ENCODE measurements at regions of chr9 and their contacts with region 1.

Region 1: DNA sequence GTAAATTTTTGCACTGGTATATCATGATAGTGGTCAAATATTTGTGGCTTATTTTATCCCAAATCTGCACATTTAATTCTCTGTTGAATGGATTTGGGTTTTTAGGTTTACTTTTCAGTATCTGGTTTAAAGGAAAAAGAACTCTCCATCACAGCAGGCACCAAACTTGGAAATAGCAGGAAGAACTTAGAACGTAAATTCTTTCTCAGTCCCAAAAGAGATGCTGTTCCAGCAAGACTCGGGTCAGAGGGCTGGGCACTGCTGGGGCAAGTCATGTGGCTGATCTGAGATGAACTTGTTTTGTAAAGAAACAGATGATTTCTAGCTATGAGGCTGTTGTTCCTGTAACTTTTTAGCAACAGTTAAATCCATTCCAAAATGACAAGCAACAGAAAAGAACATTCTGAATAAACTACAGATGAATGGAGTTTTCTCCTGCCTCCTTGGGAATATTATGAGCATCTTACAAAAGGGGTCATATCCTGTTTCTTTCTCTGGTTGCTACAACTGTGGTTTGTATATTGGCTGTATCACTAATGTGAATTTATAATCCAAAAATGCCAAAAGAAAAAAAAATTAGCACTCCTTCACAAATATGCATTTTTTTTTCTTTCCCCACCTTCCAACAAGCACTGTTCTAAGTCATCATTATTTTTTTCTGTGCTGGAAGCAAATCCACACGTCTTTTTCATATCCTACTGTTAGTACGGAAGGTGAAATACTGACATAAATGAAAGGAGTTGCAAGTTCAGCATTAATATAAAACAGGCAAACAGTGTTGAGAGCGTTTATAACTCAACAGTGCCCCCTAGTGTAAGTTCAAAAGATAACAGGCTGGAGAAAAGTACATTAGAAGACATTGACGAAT is 31.1 kb downstream of the OR2K2 start:
- DNase-seq: peak; percentile 85
- H3K4me3 ChIP-seq: no peak overlapping the region
- H3K27ac ChIP-seq: peak overlapping the region; percentile 35 to 45 (median 42)
- H3K4me1 ChIP-seq: peaks cover 0 to 7% (median 0%) of the 10 kb centered on the region in 4 donors
- H3K27me3 ChIP-seq: no peaks in the 10 kb centered on the region
- CTCF ChIP-seq: peak; percentile 64 to 82 (median 74)
- EP300 ChIP-seq: peak in 1 of 4 donors; percentile 2
- POLR2A ChIP-seq: no peak

Region 2: GRCh38 chr9:110638381-110638954 is 660.5 kb before region 1 on chr9:
- intact Hi-C with region 1: loop called (anchors 5 kb)
- DNase-seq: no peak
- H3K4me3 ChIP-seq: no peak overlapping the region
- H3K27ac ChIP-seq: no peak overlapping the region
- H3K4me1 ChIP-seq: no peaks in the 10 kb centered on the region
- H3K27me3 ChIP-seq: no peaks in the 10 kb centered on the region
- CTCF ChIP-seq: peak in 2 of 4 experiments; percentile 10 to 34
- EP300 ChIP-seq: no peak
- POLR2A ChIP-seq: no peak

Region 3: GRCh38 chr9:110900917-110901316 is 398.0 kb before region 1 on chr9:
- intact Hi-C with region 1: loop called (anchors 10 kb)
- DNase-seq: no peak
- H3K4me3 ChIP-seq: no peak overlapping the region
- H3K27ac ChIP-seq: peak overlapping the region in 2 of 4 donors; percentile 15 to 21
- H3K4me1 ChIP-seq: no peaks in the 10 kb centered on the region
- H3K27me3 ChIP-seq: no peaks in the 10 kb centered on the region
- CTCF ChIP-seq: no peak
- EP300 ChIP-seq: no peak
- POLR2A ChIP-seq: no peak